HEK293 (cell line): ENCODE measurements at regions of chr22 and their contacts with region 1.

Region 1: DNA sequence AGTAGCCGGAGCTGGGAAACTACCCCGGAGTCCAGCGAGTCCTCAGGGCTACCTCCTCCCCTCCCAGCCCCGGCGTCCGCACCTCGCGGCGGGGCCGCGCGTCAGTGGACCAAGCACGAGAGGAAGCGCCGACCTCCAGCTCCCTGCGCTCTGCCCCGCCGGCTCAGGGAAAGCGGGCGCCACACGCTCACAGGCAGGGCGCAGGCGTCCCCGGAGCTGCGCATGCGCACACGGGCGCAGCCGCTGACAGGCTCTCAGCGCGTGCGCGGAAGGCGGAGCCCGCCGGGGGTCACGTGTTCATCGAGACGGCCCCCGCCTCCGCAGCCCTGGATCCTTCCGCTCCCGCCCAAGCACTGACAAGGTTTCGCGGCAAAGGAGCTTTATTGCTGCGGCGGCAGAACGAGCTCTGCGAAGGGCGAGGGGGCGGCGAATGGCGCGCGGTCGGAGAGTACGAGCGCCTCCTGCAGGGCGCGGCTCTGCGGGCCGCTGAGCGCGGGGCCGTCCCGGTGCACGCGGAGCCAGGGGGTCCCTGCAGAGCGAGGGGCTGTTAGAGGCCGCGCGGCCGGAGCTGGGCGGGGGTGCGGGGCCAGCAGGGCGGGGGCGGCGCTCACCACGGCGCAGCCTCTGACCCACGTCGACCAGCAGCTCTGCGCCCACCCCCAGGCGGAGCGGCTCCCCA is at the start of gene SCO2:
- H3K4me3 ChIP-seq: peak within 1 kb of the TSS; percentile 79
- H3K27ac ChIP-seq: peak within 1 kb of the TSS; percentile 90
- H3K4me1 ChIP-seq: no peaks in the 10 kb centered on the region; the same call in 1 of the 2 replicates
- CTCF ChIP-seq: no peak

Region 2: GRCh38 chr22:50469377-50470305 is 55.9 kb before region 1 on chr22:
- CTCF ChIA-PET with region 1: interaction called, 16 read pairs
- POLR2A ChIA-PET with region 1: interaction called, 9 read pairs
- H3K4me3 ChIP-seq: no peak overlapping the region
- H3K27ac ChIP-seq: peak overlapping the region; percentile 51; the same call in 1 of the 2 replicates
- H3K4me1 ChIP-seq: peaks cover 23% of the 10 kb centered on the region
- CTCF ChIP-seq: no peak

Region 3: DNA sequence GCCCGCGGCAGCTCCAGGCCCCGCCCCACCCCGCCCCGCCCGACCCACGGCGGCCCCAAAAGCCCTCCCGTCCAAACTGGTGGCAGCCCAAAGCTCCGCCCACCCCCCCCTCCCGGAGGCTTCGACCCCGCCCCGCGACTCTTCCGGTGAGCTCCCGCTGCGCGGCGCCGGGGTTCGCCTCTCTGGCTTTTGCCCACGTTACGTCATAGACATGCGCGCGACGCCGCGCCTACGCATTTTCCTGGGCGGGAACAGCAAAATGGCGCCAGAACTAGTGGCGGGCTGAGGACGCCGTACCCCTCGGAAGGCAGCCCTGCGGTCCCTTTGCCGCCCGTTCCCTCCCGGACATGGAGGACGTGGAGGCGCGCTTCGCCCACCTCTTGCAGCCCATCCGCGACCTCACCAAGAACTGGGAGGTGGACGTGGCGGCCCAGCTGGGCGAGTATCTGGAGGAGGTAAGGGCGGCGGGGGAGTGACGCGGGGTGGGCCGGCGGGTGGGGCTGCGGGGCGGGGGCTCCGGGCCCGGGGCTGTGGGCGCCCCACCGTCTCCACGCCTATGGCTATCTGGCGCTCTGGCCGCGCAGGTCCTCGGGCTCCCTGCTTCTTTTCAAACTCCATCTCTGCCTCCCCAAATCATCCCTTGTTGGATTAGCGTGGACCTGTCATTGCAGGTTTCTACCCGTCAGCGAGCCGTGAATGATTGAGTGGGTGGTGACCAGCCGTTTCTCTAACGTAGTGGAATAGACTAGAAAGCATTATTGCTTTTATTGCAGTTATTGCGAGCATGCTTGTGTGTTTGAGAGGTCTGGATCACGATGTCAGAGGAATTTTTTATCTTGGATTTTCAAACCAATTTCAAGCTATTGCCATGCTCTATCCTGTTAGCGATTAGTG is 17.3 kb before region 1 on chr22 and contains the start of gene NCAPH2:
- CTCF ChIA-PET with region 1: interaction called, 32 read pairs
- POLR2A ChIA-PET with region 1: interaction called, 189 read pairs
- H3K4me3 ChIP-seq: peak within 1 kb of the TSS; percentile 100
- H3K27ac ChIP-seq: peak within 1 kb of the TSS; percentile 97
- H3K4me1 ChIP-seq: peaks cover 8% of the 10 kb centered on the region
- CTCF ChIP-seq: no peak

Region 4: GRCh38 chr22:50562523-50563412 is 37.2 kb after region 1 on chr22 and contains the start of gene SYCE3:
- CTCF ChIA-PET with region 1: interaction called, 37 read pairs
- POLR2A ChIA-PET with region 1: interaction called, 28 read pairs
- H3K4me3 ChIP-seq: peak within 1 kb of the TSS; percentile 55
- H3K27ac ChIP-seq: peak within 1 kb of the TSS; percentile 40; the same call in 1 of the 2 replicates
- H3K4me1 ChIP-seq: 0 out of 2 replicates have a peak, but pooled peaks cover 2% of the 10 kb centered on the region
- CTCF ChIP-seq: peak; percentile 97

Region 5: DNA sequence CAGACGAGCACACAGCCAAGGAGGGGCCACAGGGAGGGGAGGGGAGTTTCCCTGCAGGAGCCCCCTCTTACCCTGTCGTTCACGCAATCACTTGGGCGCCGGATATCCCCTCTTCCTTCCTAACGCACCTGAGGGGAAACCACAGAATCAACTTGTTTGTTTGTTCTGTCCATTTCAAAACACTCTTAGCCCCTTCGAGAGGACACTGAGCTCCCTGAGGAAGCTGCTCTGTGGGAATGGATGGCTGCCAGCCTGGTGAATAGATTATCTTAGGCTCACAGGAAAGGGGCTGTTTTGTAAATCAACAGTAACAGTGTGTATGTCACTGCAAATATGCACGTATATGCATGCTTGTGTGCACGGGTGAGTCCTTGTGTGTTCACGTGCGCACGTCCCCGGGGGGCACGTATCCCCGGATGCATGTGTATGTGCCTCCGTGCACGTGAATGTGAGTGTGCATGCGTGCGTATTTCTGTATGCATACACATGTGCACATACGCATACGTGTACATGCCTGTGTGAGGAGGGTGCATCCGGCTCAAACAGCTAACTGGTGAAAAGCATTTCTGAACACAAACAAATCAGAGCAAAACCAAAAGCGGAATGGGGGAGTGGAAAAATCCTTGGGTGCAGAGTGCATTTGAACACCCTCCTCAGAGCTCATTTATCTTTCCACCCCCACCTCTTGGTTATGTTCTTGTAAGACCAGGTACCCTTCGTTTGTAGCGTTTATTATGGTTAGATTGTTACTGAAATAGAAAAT is 95.2 kb after region 1 on chr22:
- CTCF ChIA-PET with region 1: interaction called, 4 read pairs
- POLR2A ChIA-PET with region 1: interaction called, 13 read pairs
- H3K4me3 ChIP-seq: no peak overlapping the region
- H3K27ac ChIP-seq: no peak overlapping the region
- H3K4me1 ChIP-seq: peaks cover 7% of the 10 kb centered on the region; the same call in 1 of the 2 replicates
- CTCF ChIP-seq: no peak